ENCODE measurements at regions of chr13 and their contacts with region 1.

Region 1: DNA sequence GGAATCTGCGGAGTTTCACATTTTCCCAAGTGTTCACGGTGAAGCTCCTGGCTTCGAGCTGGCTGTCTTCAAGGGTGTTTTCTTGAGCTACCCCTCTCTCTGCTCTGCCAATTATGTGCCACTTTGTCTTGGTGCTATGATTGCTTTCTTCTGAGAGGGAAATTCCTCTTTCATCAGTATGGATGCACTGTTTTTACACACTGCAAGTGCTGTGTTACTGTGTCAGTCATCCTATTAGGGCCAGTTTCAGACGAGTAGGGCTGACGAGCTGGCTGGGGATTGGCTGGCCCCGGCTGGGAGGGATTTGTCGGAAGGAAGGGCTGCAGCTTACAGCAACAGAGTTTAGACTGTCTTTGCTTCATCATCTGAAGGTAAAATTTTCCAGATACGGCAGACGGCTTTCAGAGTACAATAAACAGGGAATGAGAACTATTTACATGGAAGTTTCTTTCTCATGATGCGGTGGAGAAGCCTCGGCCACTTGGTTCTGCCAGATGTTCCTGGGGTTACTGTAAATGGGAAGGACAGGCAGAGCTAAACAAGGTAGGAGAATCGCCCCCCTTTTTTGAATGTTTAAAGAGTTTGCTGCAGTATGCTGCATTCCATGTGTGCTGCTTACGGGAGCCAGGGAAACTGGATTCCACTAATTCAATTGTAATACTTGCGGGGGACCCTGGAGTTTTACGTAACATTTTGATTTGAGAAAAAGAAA is at the start of gene MBNL2:
- DNase-seq: peak; percentile 92 to 100 (median 97)

Region 2: GRCh38 chr13:97261254-97262005 is 39.3 kb after region 1 on chr13:
- intact Hi-C with region 1: loop called (anchors 5 kb)
- DNase-seq: peak in 1 of 10 donors; percentile 67

Region 3: DNA sequence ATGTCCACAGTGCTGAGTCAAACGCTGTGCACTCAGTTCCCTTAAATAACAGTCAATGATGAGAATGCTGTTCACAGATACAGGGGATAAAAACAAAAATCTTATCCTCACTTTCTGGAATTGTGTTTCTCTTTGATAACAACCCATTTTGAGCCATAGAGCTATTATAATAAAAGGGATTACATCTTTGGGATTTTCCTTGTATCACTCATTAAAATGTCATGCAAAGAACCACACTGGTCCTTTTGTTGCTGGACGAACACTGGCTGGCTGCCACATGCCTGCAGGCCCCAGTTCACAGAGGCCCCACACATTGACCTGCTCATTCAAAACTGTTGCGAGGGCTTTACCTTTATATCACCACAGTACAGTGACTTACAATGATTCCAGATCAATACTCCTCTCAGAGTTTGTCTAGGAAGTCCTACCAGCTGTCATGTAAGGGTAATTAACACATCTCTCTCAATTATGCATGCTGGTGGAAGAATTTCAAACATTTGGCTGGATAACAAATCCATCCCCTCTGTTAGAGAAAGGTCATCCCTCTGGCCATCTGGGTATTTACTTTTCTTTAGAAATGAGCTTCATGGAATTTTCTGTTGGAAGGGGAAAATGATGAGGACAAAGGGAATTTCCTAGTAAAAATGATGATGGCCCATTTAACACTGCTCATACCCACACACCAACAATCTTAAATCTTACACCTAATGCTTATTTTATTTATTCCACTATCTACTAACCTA is 85.9 kb after region 1 on chr13:
- intact Hi-C with region 1: loop called (anchors 10 kb)
- DNase-seq: peak in 9 of 10 donors; percentile 38 to 95 (median 68)

Region 4: DNA sequence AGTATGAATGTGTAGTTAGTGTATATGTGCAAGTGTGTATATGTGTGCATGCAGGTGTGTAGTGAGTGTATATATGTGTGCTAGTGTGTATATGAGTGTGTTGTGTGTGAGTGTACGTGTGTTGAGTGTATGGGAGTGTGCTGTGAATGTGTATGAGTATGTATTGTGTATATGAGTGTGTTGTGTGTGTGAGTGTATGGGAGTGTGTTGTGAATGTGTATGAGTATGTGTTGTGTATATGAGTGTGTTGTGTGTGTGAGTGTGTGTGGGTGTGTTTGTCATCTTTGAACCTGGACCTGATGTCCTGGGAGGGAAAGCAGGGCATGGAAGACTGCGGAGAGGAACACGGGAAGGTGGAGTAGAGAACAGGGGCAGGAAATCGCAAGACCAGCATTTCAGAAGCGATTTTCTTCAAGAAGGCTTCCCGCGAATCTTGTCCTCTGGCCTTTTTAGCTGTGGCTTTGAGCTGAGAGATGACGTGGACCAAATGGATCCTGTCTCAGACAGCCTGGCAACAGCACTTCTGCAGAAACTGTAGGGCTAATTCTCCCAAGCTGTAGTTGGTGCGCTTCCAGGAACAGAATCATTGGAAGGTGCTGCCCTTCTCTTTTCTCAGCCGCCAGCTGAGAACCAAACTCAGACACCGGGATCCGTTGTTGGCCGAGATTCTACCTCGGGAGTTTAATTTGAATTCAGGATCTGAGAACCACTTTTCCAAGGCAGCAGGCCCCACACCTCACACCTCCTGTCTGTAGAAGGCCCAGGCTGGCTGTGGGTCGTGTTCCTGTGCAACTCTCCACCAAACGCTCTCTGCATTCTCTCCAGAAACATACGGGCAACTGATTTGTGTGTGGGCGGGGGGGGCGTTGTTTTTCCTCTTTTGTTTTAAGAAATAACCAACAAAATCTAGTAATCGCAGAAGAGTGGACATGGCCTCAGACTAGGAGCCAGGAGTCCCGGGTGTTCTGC is 117.2 kb after region 1 on chr13:
- intact Hi-C with region 1: loop called (anchors 5 kb)
- DNase-seq: peak in 7 of 10 donors; percentile 40 to 88 (median 48)

Region 5: DNA sequence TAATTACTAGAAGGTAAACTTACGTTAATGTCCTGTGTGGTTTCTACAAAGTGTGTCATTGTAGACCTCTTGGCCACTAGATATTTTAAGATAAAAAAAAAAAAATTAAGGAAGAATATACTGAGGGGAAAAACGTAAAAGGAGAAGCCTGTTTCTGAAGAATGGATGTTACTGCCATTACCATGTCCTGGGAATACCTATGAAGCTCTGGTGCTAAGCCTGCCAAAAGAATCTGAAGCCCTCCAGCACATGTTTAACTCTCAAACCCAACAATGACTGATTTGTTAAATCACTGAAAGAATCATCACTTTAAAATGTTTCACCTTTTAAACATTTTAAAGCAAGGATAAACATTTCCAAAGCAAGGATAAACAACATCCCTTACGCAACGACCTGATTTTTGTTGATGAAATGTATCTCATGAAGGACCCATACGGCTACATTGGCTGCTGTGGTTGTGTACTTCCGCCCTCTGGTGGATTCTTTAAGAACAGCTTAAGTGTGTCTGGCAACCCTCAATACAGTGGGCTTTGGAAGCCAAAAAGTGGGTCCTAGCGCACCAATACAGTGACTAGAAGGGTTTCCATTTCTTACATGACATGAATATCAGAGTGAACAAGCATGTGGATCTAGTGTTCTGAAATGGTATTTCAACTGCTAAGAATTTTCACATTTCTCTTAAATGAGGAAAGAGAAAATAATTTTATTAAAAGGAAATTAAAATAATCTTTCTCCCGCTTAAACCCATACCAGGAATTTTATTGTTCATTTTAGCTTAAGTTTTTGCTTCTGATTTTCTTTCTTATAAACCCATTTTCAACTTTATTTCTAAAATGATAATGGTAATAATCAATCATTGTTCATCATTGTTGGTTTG is 137.3 kb after region 1 on chr13:
- intact Hi-C with region 1: loop called (anchors 5 kb)
- DNase-seq: peak in 5 of 10 donors; percentile 34 to 86 (median 44)

Region 6: GRCh38 chr13:97432917-97433726 is 211.0 kb after region 1 on chr13:
- intact Hi-C with region 1: loop called (anchors 5 kb)
- DNase-seq: peak; percentile 98 to 100 (median 98)

Measured in posterior cingulate gyrus (tissue), 11 donors.